ENCODE measurements at regions of chr11 and their contacts with region 1.

Region 1: DNA sequence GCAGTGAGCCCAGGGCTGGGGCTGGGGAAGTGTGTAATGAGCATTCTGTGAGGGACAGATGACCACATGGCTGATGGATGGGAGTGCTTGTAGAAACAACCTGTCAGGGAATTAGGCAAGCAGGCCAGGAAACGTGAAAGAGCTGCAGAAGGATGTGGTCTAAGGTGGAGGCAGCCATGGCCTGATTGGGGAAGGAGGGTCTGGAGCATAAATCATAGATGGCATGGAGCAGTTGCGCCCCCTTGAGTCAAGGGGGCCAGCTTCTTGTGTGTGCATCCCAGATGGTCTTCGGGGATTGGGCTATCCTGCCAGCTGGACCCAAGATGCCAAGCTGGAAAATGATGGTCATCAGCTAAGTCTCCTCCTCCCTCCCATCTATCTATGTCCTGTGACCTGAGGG is 119.4 kb upstream of the CLPB start:
- DNase-seq: peak; percentile 25 to 74
- H3K4me3 ChIP-seq: no peak overlapping the region
- H3K27ac ChIP-seq: no peak overlapping the region
- H3K4me1 ChIP-seq: no peaks in the 10 kb centered on the region
- H3K27me3 ChIP-seq: no peaks in the 10 kb centered on the region
- CTCF ChIP-seq: peak; percentile 81 to 92 (median 84)
- EP300 ChIP-seq: no peak
- POLR2A ChIP-seq: no peak
- RAD21 ChIP-seq: peak; percentile 90 to 93

Region 2: DNA sequence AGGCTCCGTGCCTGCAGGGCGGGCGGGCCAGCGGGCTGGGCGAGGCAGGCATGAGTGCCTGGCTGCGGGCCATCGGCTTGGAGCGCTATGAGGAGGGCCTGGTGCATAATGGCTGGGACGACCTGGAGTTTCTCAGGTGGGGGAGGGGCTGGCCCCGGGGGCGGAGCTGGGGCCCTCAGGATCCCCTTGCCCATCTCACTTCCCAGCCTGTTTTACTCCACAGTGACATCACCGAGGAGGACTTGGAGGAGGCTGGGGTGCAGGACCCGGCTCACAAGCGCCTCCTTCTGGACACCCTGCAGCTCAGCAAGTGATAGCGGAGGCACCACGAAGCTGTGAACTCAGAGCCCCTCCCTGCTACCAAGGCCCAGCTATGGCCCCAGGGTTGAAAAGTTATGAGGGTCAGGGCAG is 315.7 kb before region 1 on chr11:
- CTCF ChIA-PET with region 1: no interaction called
- POLR2A ChIA-PET with region 1: no interaction called
- DNase-seq: peak; percentile 85 to 92
- H3K4me3 ChIP-seq: peak overlapping the region in 3 of 4 experiments; percentile 9 to 60 (median 34); a peak in 4 of 8 replicates
- H3K27ac ChIP-seq: 0 out of 2 replicates have a peak overlapping the region, but pooled peaks have one; percentile 6
- H3K4me1 ChIP-seq: peaks cover 3 to 29% (median 23%) of the 10 kb centered on the region in 4 experiments
- H3K27me3 ChIP-seq: peaks cover 36 to 47% (median 44%) of the 10 kb centered on the region in 4 experiments
- CTCF ChIP-seq: peak; percentile 88 to 95 (median 92)
- EP300 ChIP-seq: peak in 1 of 2 experiments; percentile 56; a peak in 1 of 3 replicates
- POLR2A ChIP-seq: no peak
- RAD21 ChIP-seq: peak; percentile 74 to 81

Region 3: DNA sequence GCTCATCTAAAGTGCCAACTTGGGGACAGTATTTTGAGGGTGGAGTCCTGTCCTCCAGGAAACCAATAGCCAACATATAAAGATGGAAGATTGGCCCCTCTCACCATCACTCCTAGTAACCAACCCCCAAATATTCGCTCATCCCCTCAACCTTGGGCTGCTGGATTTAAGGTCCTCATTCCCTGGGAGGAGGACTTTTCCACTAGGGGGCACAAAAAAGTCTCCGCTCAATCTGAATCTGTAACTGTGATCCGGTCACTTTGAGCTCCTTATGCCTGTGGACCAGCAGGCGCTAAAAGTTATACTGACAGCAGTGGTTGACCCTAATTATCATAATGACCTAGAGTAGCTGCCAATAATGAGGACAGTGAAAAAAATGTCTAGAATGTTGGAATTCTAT is 98.9 kb before region 1 on chr11:
- CTCF ChIA-PET with region 1: interaction called, 52 read pairs
- POLR2A ChIA-PET with region 1: no interaction called
- DNase-seq: no peak
- H3K4me3 ChIP-seq: no peak overlapping the region
- H3K27ac ChIP-seq: no peak overlapping the region
- H3K4me1 ChIP-seq: no peaks in the 10 kb centered on the region
- H3K27me3 ChIP-seq: no peaks in the 10 kb centered on the region; a peak in 3 of 7 replicates
- CTCF ChIP-seq: peak; percentile 38 to 56 (median 43)
- EP300 ChIP-seq: no peak
- POLR2A ChIP-seq: no peak
- RAD21 ChIP-seq: peak; percentile 12 to 44; a peak in 2 of 4 replicates

Region 4: GRCh38 chr11:72483412-72484186 is 70.1 kb before region 1 on chr11:
- CTCF ChIA-PET with region 1: interaction called, 36 read pairs
- POLR2A ChIA-PET with region 1: no interaction called
- DNase-seq: no peak
- H3K4me3 ChIP-seq: no peak overlapping the region
- H3K27ac ChIP-seq: no peak overlapping the region
- H3K4me1 ChIP-seq: no peaks in the 10 kb centered on the region
- H3K27me3 ChIP-seq: no peaks in the 10 kb centered on the region
- CTCF ChIP-seq: no peak
- EP300 ChIP-seq: no peak
- POLR2A ChIP-seq: no peak
- RAD21 ChIP-seq: no peak

Region 5: GRCh38 chr11:72541257-72541974 is 12.3 kb before region 1 on chr11:
- CTCF ChIA-PET with region 1: interaction called, 26 read pairs
- POLR2A ChIA-PET with region 1: no interaction called
- DNase-seq: no peak
- H3K4me3 ChIP-seq: no peak overlapping the region
- H3K27ac ChIP-seq: no peak overlapping the region
- H3K4me1 ChIP-seq: no peaks in the 10 kb centered on the region
- H3K27me3 ChIP-seq: no peaks in the 10 kb centered on the region; a peak in 1 of 7 replicates
- CTCF ChIP-seq: no peak
- EP300 ChIP-seq: no peak
- POLR2A ChIP-seq: no peak
- RAD21 ChIP-seq: no peak